T-cell (primary cell): ENCODE measurements at regions of chr17 and their contacts with region 1.

Region 1: GRCh38 chr17:41930009-41930832 is at the start of gene ODAD4:
- DNase-seq: peak; percentile 87 to 99 (median 97)
- ATAC-seq: peak; percentile 97 to 100 (median 99)
- H3K4me3 ChIP-seq: peak within 1 kb of the TSS; percentile 64 to 73
- H3K4me3 Mint-ChIP-seq: peak within 1 kb of the TSS; percentile 85 to 100 (median 95)
- H3K27ac ChIP-seq: peak within 1 kb of the TSS; percentile 84
- H3K27ac Mint-ChIP-seq: peak within 1 kb of the TSS; percentile 94 to 100
- H3K4me1 ChIP-seq: peaks cover 7 to 20% of the 10 kb centered on the region in 2 experiments
- H3K4me1 Mint-ChIP-seq: peaks cover 22 to 28% (median 28%) of the 10 kb centered on the region in 3 donors
- H3K27me3 ChIP-seq: peaks cover 0 to 4% of the 10 kb centered on the region in 2 experiments
- H3K27me3 Mint-ChIP-seq: no peaks in the 10 kb centered on the region
- total RNA-seq, gene ODAD4: 0.22 to 2.0 (median 0.39) TPM in 4 of 5 donors, not detected in the other

Region 2: GRCh38 chr17:41918314-41919164 is 11.7 kb before region 1 on chr17 and contains the start of gene ACLY:
- CTCF ChIA-PET with region 1: interaction called in 1 of 2 experiments, 12 read pairs
- POLR2A ChIA-PET with region 1: interaction called, 3 to 14 read pairs
- DNase-seq: peak; percentile 85 to 96 (median 90)
- ATAC-seq: peak; percentile 99
- H3K4me3 ChIP-seq: peak within 1 kb of the TSS; percentile 77 to 100
- H3K4me3 Mint-ChIP-seq: peak within 1 kb of the TSS; percentile 88 to 93 (median 91)
- H3K27ac ChIP-seq: peak within 1 kb of the TSS; percentile 57
- H3K27ac Mint-ChIP-seq: peak within 1 kb of the TSS; percentile 74 to 85
- H3K4me1 ChIP-seq: peaks cover 6 to 49% of the 10 kb centered on the region in 2 experiments
- H3K4me1 Mint-ChIP-seq: peaks cover 34 to 39% (median 38%) of the 10 kb centered on the region in 3 donors
- H3K27me3 ChIP-seq: no peaks in the 10 kb centered on the region
- H3K27me3 Mint-ChIP-seq: no peaks in the 10 kb centered on the region
- total RNA-seq, gene ACLY: 69.1 to 101 (median 96.3) TPM

Region 3: GRCh38 chr17:41966463-41967140 is 36.4 kb after region 1 on chr17 and contains the start of gene CNP:
- CTCF ChIA-PET with region 1: interaction called in 1 of 2 experiments, 12 read pairs
- POLR2A ChIA-PET with region 1: interaction called in 1 of 2 experiments, 3 read pairs
- DNase-seq: peak; percentile 77 to 95 (median 86)
- ATAC-seq: peak; percentile 83 to 90 (median 85)
- H3K4me3 ChIP-seq: peak within 1 kb of the TSS; percentile 81 to 91
- H3K4me3 Mint-ChIP-seq: peak within 1 kb of the TSS; percentile 81 to 92 (median 83)
- H3K27ac ChIP-seq: peak within 1 kb of the TSS; percentile 70
- H3K27ac Mint-ChIP-seq: peak within 1 kb of the TSS; percentile 93
- H3K4me1 ChIP-seq: peaks cover 5 to 43% of the 10 kb centered on the region in 2 experiments
- H3K4me1 Mint-ChIP-seq: peaks cover 42 to 53% (median 46%) of the 10 kb centered on the region in 3 donors
- H3K27me3 ChIP-seq: peaks cover 0 to 8% of the 10 kb centered on the region in 2 experiments
- H3K27me3 Mint-ChIP-seq: no peaks in the 10 kb centered on the region
- total RNA-seq, gene CNP: 24.4 to 36.2 (median 34.3) TPM